Activated CD4-positive, alpha-beta T cell treated with anti-CD3 and anti-CD28 coated beads for 36 hours (primary cell): ENCODE measurements at regions of chr5 and their contacts with region 1.

Region 1: DNA sequence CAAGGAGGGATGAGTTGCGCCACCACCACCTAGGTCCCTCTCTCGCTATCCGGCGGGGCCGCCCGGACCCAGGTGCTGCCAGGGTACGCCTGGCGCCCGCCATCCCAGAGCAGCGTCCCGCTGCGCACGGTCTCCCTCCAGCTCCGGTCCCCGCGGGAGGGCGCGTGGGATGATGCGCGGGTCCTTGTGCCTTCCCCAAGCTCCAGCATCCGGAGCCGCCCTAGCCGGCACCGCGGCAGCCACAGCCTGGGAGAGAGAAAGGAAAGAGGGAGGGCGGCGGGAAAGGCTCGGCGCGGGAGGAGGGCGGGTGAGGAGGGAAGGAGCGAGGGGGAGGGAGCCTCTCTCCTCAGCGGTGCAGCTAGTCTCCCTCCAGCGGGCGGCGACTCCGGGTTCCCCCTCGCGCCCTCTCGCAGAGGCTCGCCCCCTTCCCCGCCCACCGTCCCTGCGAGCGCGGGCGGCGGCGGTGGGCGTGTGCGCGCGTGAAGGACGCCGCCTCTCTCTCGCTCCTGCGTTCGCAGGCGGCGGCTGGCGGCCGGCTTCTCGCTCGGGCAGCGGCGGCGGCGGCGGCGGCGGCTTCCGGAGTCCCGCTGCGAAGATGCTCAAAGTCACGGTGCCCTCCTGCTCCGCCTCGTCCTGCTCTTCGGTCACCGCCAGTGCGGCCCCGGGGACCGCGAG is at the start of gene CAMK4:
- DNase-seq: peak; percentile 81
- ATAC-seq: peak; percentile 57
- H3K4me3 Mint-ChIP-seq: peak within 1 kb of the TSS; percentile 97
- H3K27ac Mint-ChIP-seq: peak within 1 kb of the TSS; percentile 87
- H3K4me1 Mint-ChIP-seq: peaks cover 25% of the 10 kb centered on the region
- H3K27me3 Mint-ChIP-seq: no peaks in the 10 kb centered on the region
- total RNA-seq, gene CAMK4: 49.4 to 53.1 TPM

Region 2: DNA sequence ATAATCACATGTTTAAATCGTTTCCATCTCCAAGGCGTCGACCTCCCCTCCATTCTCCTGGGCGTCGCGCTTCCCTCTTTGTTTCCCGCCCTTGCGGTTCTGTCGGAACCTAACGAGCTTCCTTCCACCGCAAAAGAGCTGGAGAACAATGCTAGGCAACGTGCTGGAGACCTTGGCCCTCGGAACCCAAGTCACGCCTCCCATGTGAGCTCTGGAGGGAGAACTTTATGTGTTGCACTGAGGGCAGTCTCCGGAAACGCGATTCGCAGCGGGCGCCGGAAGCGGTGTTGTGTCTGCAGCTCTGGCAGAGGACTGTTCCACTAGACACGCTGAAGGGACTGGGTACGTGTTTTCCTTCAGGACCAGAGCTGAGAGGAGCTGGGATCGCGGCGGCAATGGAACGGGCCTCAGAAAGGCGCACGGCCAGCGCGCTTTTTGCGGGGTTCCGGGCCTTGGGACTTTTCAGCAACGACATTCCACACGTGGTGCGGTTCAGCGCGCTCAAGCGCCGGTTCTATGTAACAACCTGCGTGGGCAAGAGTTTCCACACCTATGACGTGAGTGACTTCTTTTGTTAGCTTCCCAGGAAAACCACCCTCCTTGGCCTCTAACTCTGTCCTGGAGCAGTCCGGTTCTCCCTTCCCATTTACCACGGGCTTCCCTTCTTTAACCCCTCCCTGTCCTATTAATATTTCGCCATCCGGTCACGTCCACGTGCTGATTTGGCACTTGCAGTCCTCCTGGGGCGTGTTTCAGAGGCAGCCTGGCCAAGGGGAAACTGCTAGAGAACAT is 131.8 kb before region 1 on chr5 and contains the start of gene WDR36:
- CTCF ChIA-PET with region 1: no interaction called
- POLR2A ChIA-PET with region 1: no interaction called
- intact Hi-C with region 1: loop called in 1 of 2 experiments (anchors 1 kb)
- DNase-seq: peak; percentile 93
- ATAC-seq: peak; percentile 91
- H3K4me3 Mint-ChIP-seq: peak within 1 kb of the TSS; percentile 92
- H3K27ac Mint-ChIP-seq: peak within 1 kb of the TSS; percentile 96
- H3K4me1 Mint-ChIP-seq: peaks cover 31% of the 10 kb centered on the region
- H3K27me3 Mint-ChIP-seq: peaks cover 4% of the 10 kb centered on the region
- total RNA-seq, gene WDR36: 58.6 to 61.7 TPM

Region 3: DNA sequence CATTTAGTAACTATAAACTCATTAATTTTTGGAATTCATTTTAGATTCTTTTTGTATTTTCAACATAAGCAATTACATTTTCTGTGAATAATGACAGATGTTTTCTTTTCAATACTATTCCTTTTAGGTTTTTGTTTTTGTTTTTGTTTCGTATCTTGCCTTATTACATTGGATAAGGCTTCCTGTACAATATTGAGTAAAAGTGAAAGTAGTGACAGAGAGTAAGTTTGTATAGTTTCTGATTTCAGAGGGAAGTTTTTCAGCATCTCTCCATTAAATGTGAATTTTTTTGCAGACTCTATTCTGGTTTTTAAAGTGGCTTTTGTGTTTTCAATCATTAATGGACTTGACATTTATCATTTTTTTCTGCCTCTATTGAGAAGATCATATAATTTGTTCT is 12.7 kb before region 1 on chr5:
- CTCF ChIA-PET with region 1: interaction called, 11 read pairs
- POLR2A ChIA-PET with region 1: interaction called, 3 read pairs
- intact Hi-C with region 1: no loop called
- DNase-seq: no peak
- ATAC-seq: peak; percentile 81
- H3K4me3 Mint-ChIP-seq: no peak overlapping the region
- H3K27ac Mint-ChIP-seq: peak overlapping the region; percentile 14
- H3K4me1 Mint-ChIP-seq: peaks cover 36% of the 10 kb centered on the region
- H3K27me3 Mint-ChIP-seq: peaks cover 3% of the 10 kb centered on the region

Region 4: DNA sequence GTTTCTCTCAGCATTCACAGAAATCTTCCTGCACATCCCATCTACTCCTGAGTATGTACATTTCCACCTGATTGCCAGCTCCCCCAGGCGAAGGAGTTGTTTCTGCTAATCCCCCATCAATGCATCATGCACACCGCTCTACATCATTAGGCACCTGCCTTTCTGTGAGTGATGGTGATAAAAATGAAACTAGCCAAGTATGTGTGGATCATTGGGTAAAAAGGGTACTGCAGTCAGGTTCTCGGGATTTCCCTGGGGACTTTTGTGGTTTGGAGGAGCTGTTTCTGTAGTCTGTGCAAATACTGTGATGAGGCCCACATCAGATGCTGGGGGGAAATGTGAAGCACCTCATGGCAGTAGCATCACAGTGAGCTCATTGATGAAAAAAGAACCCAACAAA is 30.6 kb after region 1 on chr5:
- CTCF ChIA-PET with region 1: interaction called, 23 read pairs
- POLR2A ChIA-PET with region 1: interaction called, 47 read pairs
- intact Hi-C with region 1: loop called in 1 of 2 experiments (anchors 1 kb)
- DNase-seq: peak; percentile 91
- ATAC-seq: peak; percentile 86
- H3K4me3 Mint-ChIP-seq: peak overlapping the region; percentile 63
- H3K27ac Mint-ChIP-seq: peak overlapping the region; percentile 95
- H3K4me1 Mint-ChIP-seq: peaks cover 91% of the 10 kb centered on the region
- H3K27me3 Mint-ChIP-seq: no peaks in the 10 kb centered on the region

Region 5: GRCh38 chr5:111337688-111338087 is 113.7 kb after region 1 on chr5:
- CTCF ChIA-PET with region 1: no interaction called
- POLR2A ChIA-PET with region 1: no interaction called
- intact Hi-C with region 1: loop called in 1 of 2 experiments (anchors 2 kb)
- DNase-seq: no peak
- ATAC-seq: peak; percentile 88
- H3K4me3 Mint-ChIP-seq: peak overlapping the region; percentile 20
- H3K27ac Mint-ChIP-seq: peak overlapping the region; percentile 87
- H3K4me1 Mint-ChIP-seq: peaks cover 77% of the 10 kb centered on the region
- H3K27me3 Mint-ChIP-seq: no peaks in the 10 kb centered on the region

Region 6: DNA sequence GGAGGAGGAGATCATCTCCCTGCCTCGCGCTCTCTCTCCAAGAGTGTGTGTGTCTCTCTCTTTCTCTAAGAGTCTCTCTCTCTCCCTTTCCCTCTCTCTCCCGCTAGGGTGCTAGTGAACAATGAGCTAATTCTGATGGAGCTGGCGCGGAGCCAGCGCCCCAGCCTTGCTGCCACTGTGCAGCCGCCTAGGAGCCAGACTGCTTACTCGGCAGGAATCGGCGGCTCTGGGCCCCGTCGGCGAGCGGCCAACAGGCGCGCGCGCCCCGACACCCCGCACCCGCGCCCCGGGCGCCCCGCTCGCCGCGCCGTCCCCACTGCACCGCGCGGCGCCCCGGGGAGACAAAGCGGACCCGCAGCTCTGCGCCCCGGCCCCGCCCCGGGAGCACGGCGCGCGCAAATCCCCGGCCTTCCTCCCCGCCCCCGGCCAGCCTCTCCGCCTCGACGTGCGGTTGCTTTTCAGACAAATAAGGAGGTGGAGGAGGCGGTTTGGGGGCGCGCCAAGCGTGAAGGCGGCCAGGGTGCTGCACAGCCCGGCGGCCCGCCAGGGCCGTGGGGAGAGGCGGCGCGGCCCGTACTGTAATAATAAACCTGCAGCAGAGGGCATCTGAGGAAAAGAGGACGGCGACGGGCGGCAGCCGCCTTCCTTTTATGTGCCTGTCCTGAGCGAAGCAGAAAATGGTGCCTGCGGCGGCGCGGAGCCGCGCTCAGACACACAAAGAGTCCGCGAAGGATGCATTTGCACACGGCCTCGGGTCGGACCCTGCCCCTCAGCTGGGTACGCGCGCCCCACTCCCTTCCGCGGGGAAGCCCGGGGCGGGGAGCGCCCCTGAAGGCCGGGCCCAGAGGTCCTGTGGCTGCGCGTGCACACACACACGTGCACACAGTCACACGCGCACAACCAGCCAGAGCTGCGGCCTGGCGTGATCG is 533.6 kb after region 1 on chr5:
- CTCF ChIA-PET with region 1: no interaction called
- POLR2A ChIA-PET with region 1: no interaction called
- intact Hi-C with region 1: loop called in 1 of 2 experiments (anchors 10 kb)
- DNase-seq: peak; percentile 91
- ATAC-seq: peak; percentile 78
- H3K4me3 Mint-ChIP-seq: peak overlapping the region; percentile 80
- H3K27ac Mint-ChIP-seq: peak overlapping the region; percentile 86
- H3K4me1 Mint-ChIP-seq: peaks cover 18% of the 10 kb centered on the region
- H3K27me3 Mint-ChIP-seq: peaks cover 3% of the 10 kb centered on the region